ENCODE measurements at regions of chr13 and their contacts with region 1.

Region 1: DNA sequence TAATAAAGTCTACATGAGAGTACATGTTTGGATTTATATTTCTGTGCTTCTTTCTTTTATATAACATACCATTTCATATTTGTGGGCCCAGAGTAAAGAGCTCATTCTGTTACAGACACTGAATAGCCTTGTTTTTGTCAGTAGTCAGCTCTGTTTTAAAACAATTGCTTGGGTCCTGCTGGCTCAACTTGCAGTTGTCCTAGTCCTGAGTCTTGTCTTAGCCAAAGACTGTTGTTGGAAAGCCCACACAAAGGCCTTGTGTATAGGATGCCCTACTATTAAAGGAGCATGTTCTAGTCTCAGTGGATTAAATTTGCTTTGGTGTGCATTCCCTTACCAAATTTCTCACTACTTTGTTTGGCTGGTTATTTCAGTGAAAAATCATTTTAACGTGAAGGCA is 3.8 kb upstream of the KCNRG start:
- DNase-seq: no peak
- H3K4me3 Mint-ChIP-seq: no peak overlapping the region
- H3K27ac Mint-ChIP-seq: no peak overlapping the region
- H3K4me1 Mint-ChIP-seq: peaks cover 19% of the 10 kb centered on the region
- H3K27me3 Mint-ChIP-seq: no peaks in the 10 kb centered on the region

Region 2: DNA sequence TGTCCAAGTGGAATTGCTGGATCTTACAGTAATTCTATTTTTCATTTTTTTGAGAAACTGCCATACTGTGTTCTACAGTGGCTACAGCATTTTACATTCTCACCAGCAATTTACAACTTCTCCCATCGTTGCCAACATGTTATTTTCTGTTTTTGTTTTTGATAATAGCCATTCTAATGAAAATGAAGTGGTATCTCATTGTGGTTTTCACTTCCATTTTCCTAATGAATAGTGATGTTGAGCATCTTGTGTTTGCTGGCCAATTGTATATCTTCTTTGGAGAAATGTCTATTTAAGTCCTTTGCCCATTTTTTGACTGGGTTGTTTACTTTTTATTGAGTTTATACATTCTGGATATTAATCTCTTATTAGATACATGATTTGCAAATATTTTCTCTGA is 42.4 kb after region 1 on chr13:
- intact Hi-C with region 1: loop called (anchors 5 kb)
- DNase-seq: no peak
- H3K4me3 Mint-ChIP-seq: no peak overlapping the region
- H3K27ac Mint-ChIP-seq: no peak overlapping the region
- H3K4me1 Mint-ChIP-seq: peaks cover 42% of the 10 kb centered on the region
- H3K27me3 Mint-ChIP-seq: no peaks in the 10 kb centered on the region

Measured in activated T-helper 2 cell treated with anti-CD3 and anti-CD28 coated beads, Interferon-gamma antibody, Interleukin-2, Interleukin-4, amounts not matched to agents 10 μg/mL and 5 μg/mL and 100 μg/mL, durations not matched to agents 14 hours and 24 hours and 36 hours (primary cell).